Cardiac septum (tissue), 1 donor: ENCODE measurements at regions of chr17 and their contacts with region 1.

Region 1: DNA sequence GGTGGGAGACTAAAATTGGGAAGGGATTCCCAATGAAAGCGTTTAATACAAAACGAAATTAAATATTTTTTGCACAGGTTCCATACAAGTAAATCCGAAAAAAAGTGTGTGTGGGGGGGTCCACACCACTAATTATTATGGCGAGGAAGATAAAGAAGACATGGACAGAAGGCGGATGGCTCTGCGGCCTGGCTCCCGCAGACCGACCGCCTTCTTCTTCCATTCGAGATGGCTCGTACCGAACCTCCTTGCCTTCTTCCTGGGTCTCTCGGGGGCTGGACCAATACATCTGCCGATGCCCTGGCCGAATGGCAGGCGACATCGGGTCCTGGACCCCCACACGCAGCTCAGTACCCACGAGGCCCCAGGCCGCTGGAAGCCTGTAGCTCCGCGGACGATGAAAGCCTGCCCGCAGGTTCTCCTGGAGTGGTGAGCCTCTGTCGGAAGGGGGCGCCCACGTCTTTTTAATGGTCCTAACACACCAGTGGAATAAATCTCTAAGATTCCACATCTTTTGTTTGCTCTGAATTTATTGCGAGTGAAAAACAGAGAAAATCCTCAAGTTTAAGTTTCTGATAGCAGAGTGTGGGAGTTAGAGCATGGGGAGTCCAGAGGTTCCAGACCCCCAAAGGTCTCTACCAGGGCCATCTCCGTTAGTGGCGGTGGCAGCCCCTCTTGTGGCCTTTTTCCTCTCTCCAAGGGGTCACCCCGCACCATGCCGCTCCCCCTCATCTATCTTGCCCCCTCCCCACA is 1.4 kb downstream of the PRAC2 start:
- DNase-seq: peak; percentile 83

Region 2: DNA sequence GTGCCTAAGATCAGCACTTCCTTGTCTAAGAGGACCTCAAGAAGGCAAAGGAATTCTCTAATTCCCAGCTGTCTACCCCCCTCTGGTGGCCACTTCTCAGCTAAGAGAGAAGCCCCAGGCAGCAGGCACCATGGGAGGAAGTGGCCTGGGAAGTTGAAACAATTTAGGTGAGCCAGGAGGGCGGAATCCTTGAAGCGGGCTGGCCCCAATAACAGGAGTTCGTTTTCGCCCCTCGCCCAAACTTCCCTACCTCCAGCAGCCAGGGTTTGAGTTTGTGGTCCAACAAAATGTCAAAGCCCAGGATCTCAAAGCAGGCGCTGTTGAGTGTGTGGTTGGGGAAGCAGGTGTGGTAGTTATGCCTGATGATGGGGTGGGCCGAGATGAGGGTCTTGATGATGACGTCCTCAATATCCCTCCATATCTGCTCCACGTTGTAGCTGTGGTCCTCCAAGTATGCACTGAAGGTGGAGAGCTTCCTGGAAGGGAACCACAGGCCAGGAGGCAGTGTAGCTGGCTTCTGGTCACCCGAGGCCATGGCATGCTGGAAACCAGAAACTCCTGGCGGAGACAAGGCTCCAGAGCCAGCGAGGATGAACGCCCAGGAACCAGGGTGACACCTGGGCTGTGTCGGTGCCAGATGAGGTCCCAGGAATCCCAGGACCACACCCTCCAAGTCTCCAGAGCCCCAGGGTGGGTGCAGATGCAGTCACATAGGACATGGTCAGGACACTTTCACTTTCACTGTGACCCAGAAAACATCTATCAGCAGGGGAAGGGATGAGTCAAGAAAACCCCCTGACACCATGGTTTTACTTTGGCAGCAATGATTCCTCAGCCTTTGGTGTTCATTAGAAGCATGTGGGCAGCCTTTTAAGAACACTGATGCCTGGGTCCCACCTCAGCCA is 67.0 kb after region 1 on chr17:
- intact Hi-C with region 1: loop called (anchors 5 kb)
- DNase-seq: no peak

Region 3: DNA sequence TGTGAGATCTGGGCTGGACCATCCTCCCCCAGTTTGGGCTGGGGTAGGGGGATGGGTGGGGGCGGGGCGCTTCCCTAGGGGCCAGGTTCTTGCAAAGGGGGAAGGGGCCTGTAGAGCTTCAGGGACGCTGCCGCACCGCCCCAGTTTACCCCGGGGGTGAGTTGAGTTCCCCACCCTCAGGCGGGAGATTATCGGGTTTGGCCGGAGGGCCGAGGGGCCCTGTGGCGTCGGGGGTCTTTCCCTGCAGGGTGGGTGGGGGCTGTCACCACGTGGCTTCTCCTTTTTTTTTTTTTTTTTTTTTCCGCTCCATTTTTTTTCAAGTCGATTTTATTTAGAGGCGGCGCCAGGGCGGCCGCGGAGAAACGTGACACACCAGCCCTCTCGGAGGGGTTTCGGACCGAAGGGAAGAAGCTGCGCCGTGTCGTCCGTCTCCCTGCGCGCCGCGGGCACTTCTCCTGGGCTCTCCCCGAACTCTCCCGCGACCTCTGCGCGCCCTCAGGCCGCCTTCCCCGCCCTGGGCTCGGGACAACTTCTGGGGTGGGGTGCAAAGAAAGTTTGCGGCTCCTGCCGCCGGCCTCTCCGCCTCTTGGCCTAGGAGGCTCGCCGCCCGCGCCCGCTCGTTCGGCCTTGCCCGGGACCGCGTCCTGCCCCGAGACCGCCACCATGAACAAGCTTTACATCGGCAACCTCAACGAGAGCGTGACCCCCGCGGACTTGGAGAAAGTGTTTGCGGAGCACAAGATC is 272.8 kb after region 1 on chr17 and contains the start of gene IGF2BP1:
- intact Hi-C with region 1: loop called (anchors 5 kb)
- DNase-seq: no peak
- total RNA-seq, gene IGF2BP1: not detected